Gastrocnemius medialis (tissue), 4 donors: ENCODE measurements at regions of chr4 and their contacts with region 1.

Region 1: DNA sequence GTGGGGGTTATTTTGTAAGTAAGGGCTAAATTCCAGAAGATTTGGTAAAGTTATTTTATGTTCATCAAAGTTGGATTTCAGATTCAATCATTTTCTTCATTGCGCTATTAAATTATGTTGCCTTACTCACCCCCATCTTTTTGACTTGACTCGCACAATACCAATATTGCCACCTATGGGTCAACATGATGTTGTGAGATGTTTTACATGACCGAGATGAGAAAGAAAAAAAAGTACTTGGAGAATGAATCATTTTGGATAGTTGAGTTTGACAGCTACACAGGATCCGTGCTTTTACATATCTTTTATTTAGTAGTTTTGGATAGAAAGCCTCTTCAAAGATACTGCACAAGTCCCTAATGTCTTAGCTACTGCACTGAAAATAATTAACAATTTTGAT is 224.2 kb upstream of the EMCN start:
- DNase-seq: no peak
- ATAC-seq: peak in 1 of 2 donors; percentile 56
- H3K4me3 ChIP-seq: no peak overlapping the region
- H3K27ac ChIP-seq: no peak overlapping the region
- H3K4me1 ChIP-seq: no peaks in the 10 kb centered on the region
- H3K27me3 ChIP-seq: no peaks in the 10 kb centered on the region
- CTCF ChIP-seq: peak in 3 of 5 experiments; percentile 15 to 51 (median 49)
- POLR2A ChIP-seq: no peak

Region 2: GRCh38 chr4:100421361-100421978 is 320.6 kb before region 1 on chr4:
- in situ Hi-C with region 1: loop called in 2 of 4 experiments (anchors 5 to 25 kb)
- intact Hi-C with region 1: loop called (anchors 5 kb)
- DNase-seq: no peak
- ATAC-seq: peak; percentile 75 to 76
- H3K4me3 ChIP-seq: peak overlapping the region; percentile 20 to 59 (median 42)
- H3K27ac ChIP-seq: peak overlapping the region; percentile 38 to 84 (median 75)
- H3K4me1 ChIP-seq: peaks cover 9 to 39% of the 10 kb centered on the region in 2 donors
- H3K27me3 ChIP-seq: no peaks in the 10 kb centered on the region
- CTCF ChIP-seq: peak; percentile 28 to 68 (median 62)
- POLR2A ChIP-seq: no peak

Region 3: DNA sequence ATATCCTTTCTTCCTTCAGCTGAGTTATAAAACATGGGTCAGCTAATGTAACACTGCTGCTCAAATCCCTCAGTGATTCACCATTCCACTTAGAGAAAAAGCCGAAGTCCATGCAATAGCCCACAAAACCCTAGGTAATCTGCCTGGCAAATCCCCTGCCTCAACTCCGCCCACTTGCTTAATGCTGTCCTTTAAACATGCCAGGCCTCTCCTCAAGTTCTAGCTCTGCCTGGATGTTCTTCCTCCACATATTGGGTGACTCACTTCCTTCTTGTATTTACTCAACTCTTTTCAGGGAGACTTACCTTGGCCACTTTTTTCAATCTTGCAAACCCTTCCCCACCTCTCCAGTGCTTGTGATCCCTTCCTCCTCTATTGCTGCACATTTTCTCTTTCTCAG is 314.0 kb before region 1 on chr4:
- in situ Hi-C with region 1: loop called in 2 of 4 experiments (anchors 5 to 25 kb)
- intact Hi-C with region 1: loop called (anchors 5 kb)
- DNase-seq: no peak
- ATAC-seq: no peak
- H3K4me3 ChIP-seq: no peak overlapping the region
- H3K27ac ChIP-seq: no peak overlapping the region
- H3K4me1 ChIP-seq: peaks cover 0 to 4% of the 10 kb centered on the region in 2 donors
- H3K27me3 ChIP-seq: no peaks in the 10 kb centered on the region
- CTCF ChIP-seq: no peak
- POLR2A ChIP-seq: no peak

Region 4: GRCh38 chr4:100823993-100824323 is 81.9 kb after region 1 on chr4:
- in situ Hi-C with region 1: no loop called
- intact Hi-C with region 1: no loop called
- DNase-seq: no peak
- ATAC-seq: no peak
- H3K4me3 ChIP-seq: no peak overlapping the region
- H3K27ac ChIP-seq: no peak overlapping the region
- H3K4me1 ChIP-seq: no peaks in the 10 kb centered on the region
- H3K27me3 ChIP-seq: no peaks in the 10 kb centered on the region
- CTCF ChIP-seq: no peak
- POLR2A ChIP-seq: no peak

Region 5: GRCh38 chr4:101414496-101414895 is 672.5 kb after region 1 on chr4:
- in situ Hi-C with region 1: no loop called
- intact Hi-C with region 1: no loop called
- DNase-seq: no peak
- ATAC-seq: no peak
- H3K4me3 ChIP-seq: no peak overlapping the region
- H3K27ac ChIP-seq: no peak overlapping the region
- H3K4me1 ChIP-seq: no peaks in the 10 kb centered on the region
- H3K27me3 ChIP-seq: no peaks in the 10 kb centered on the region
- CTCF ChIP-seq: no peak
- POLR2A ChIP-seq: no peak